Gastrocnemius medialis (tissue), 4 donors: ENCODE measurements at regions of chr7 and their contacts with region 1.

Region 1: DNA sequence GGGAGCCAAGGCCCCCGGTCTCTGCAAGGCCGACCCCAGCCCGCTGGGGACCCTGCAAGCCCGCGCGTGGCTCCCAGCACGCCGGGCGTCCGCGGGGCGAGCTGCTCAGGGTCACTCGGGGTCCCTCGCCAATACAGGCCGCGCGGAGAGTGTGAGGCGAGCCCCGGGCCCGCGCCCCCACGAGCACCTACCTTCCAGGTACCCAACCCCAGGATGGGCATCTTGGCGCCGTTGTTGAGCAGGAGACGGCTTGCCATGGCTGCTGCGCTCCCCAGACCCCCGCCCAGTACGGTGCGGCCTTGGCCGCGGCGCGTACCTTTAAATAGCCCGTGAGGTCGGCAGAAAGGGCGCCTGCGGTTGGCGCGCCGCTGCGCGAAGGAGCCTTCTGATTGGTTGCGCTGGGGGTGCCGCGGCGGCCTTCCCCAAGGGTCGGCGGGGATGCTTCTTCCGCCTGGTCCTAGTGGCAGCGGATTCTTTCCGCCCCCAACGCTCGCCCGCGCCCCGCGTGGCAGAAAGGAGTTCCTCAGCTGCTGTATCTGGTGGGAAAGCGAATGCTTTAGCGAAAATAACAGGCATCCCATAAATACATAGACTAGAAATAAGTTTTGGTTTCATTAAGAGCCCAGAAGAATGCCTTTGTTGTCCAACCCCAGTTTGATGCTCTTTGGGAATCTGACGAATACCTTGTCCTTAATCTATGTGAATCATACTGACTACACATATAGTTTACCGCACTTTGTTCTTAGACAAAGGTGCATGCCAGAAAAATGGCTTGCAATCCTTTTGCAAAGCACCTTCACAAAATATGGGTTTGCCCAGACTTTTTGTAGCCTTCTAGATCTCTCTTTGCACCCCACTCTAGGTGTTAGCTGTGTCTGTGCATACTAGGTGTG is at the start of gene AKR1B1:
- DNase-seq: peak; percentile 81 to 92
- ATAC-seq: peak; percentile 93 to 95
- H3K4me3 ChIP-seq: peak within 1 kb of the TSS; percentile 82 to 97 (median 88)
- H3K27ac ChIP-seq: peak within 1 kb of the TSS; percentile 87 to 95 (median 90)
- H3K4me1 ChIP-seq: peaks cover 13 to 26% of the 10 kb centered on the region in 2 donors
- H3K27me3 ChIP-seq: no peaks in the 10 kb centered on the region
- CTCF ChIP-seq: peak; percentile 32 to 57 (median 43)
- POLR2A ChIP-seq: peak; percentile 84
- total RNA-seq, gene AKR1B1: 87.3 to 119 (median 95.6) TPM

Region 2: GRCh38 chr7:134165252-134165651 is 293.8 kb before region 1 on chr7:
- in situ Hi-C with region 1: no loop called
- intact Hi-C with region 1: no loop called
- DNase-seq: no peak
- ATAC-seq: no peak
- H3K4me3 ChIP-seq: no peak overlapping the region
- H3K27ac ChIP-seq: no peak overlapping the region
- H3K4me1 ChIP-seq: no peaks in the 10 kb centered on the region
- H3K27me3 ChIP-seq: no peaks in the 10 kb centered on the region
- CTCF ChIP-seq: no peak
- POLR2A ChIP-seq: no peak

Region 3: DNA sequence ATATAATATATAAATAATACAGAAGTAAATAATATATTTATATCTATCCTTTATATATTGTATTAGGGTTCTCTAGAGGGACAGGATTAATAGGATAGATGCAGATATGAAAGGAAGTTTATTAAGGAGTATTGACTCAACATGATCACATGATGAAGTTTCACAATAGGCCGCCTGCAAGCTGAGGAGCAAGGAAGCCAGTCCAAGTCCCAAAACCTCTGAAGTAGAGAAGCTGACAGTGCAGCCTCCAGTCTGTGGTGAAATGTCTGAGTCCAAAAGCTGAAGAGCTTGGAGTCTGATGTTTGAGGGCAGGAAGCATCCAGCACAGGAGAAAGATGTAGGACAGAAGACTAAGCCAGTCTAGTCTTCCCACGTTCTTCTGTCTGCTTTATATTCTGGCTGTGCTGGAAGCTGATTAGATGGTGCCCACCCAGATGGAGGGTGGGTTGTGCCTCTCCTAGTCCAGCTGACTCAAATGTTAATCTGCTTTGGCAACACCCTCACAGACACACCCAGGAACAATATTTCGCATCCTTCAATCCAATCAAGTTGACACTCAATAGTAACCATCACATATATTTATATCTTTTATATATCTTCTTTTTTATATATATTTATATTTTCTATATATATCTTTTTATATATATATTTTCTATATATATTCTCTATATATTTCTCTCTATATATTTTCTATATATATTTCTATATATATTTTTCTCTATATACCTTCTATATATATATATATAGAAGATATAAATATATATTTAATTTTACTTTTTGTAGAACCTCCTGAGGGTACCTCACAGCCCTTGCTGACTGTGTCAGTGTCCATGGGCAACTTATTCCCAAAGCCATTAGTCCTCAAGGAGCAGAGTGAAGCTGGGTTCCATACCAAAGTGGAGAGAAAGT is 43.7 kb after region 1 on chr7:
- in situ Hi-C with region 1: no loop called
- intact Hi-C with region 1: loop called (anchors 5 kb)
- DNase-seq: peak; percentile 73 to 74
- ATAC-seq: peak; percentile 94 to 98
- H3K4me3 ChIP-seq: no peak overlapping the region
- H3K27ac ChIP-seq: peak overlapping the region; percentile 40 to 75 (median 54)
- H3K4me1 ChIP-seq: peaks cover 2% of the 10 kb centered on the region in 2 donors
- H3K27me3 ChIP-seq: no peaks in the 10 kb centered on the region
- CTCF ChIP-seq: no peak
- POLR2A ChIP-seq: no peak

Region 4: DNA sequence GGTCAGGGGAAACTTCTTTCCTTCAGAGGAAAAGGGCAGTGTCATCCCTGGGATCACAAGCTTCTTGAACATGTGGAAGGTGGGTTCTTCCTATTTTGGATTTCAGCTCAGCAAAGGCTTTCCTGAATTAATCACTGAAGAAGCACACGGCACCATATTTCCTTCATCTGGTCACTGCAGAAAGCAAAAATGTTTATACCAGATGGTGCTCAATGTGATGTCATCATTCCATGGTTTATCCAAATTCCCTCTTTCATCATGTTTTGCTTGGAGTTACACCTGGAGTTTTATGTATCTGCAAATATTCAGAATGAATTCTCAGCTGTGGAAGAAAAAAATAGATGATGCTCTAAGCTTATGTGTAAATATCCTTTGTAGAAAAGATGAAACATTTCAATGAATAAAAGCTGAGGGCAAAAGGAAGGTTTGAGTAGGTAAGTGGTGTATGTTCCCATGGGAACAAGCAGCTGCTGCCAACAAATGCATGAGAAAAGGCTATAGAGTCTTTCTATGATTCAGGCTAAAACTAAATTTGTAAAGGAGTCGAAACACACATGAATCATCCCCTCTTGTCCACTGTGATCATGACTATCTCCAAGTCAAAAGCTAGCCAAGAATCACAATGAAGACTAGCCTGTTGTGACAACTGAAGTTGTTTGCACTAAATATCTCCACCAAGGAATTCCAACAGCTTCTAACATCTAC is 160.7 kb after region 1 on chr7:
- in situ Hi-C with region 1: no loop called
- intact Hi-C with region 1: no loop called
- DNase-seq: no peak
- ATAC-seq: no peak
- H3K4me3 ChIP-seq: no peak overlapping the region
- H3K27ac ChIP-seq: no peak overlapping the region
- H3K4me1 ChIP-seq: no peaks in the 10 kb centered on the region
- H3K27me3 ChIP-seq: no peaks in the 10 kb centered on the region
- CTCF ChIP-seq: no peak
- POLR2A ChIP-seq: no peak

Region 5: GRCh38 chr7:134646425-134647305 is 187.6 kb after region 1 on chr7 and contains the start of gene BPGM:
- in situ Hi-C with region 1: no loop called
- intact Hi-C with region 1: loop called (anchors 2 kb)
- DNase-seq: peak; percentile 98 to 99
- ATAC-seq: peak; percentile 100
- H3K4me3 ChIP-seq: peak within 1 kb of the TSS; percentile 61 to 85 (median 76)
- H3K27ac ChIP-seq: peak within 1 kb of the TSS; percentile 81 to 89 (median 85)
- H3K4me1 ChIP-seq: peaks cover 17 to 20% of the 10 kb centered on the region in 2 donors
- H3K27me3 ChIP-seq: no peaks in the 10 kb centered on the region
- CTCF ChIP-seq: peak in 1 of 5 experiments; percentile 10
- POLR2A ChIP-seq: peak; percentile 89 to 98
- total RNA-seq, gene BPGM: 11.3 to 24.5 (median 13.6) TPM

Region 6: DNA sequence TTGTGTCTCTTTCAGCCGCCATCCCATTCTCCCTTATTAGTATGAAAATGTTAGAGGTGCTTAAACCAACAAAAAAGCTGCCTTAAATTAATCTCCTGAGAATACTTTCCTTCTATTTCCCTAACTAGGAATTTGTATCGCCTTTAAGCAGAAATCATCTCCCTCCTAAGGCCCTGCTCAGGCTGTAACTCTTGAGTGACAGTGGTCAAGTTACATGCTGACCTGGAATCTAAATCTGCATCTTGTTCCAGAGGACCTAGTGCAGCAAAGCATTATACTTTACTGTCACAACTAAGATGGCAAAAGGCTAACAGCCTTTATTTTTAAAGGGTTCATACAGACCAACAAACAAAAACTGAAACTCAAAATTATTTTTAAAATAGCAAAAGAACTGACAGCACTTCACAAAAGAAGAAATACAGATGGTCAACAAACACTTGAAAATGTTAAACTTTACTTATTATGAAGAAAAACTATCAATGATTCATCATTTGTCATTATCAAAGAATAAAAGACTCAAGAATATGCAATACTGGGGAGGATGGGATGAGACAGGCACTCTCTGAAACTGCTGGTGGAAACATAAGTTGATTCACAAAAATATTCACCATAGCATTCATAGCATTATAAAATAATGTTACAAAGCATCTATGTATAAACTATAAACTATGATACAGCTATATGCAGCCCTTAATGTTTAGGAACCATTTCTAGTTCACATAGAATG is 700.5 kb after region 1 on chr7:
- in situ Hi-C with region 1: no loop called
- intact Hi-C with region 1: loop called (anchors 5 kb)
- DNase-seq: peak in 1 of 2 donors; percentile 50
- ATAC-seq: peak; percentile 57 to 72
- H3K4me3 ChIP-seq: peak overlapping the region; percentile 20 to 46 (median 40)
- H3K27ac ChIP-seq: peak overlapping the region; percentile 93 to 97 (median 96)
- H3K4me1 ChIP-seq: peaks cover 89 to 96% of the 10 kb centered on the region in 2 donors
- H3K27me3 ChIP-seq: no peaks in the 10 kb centered on the region
- CTCF ChIP-seq: no peak
- POLR2A ChIP-seq: peak in 1 of 2 donors; percentile 25